Esophagus muscularis mucosa (tissue), 4 donors: ENCODE measurements at regions of chr7 and their contacts with region 1.

Region 1: DNA sequence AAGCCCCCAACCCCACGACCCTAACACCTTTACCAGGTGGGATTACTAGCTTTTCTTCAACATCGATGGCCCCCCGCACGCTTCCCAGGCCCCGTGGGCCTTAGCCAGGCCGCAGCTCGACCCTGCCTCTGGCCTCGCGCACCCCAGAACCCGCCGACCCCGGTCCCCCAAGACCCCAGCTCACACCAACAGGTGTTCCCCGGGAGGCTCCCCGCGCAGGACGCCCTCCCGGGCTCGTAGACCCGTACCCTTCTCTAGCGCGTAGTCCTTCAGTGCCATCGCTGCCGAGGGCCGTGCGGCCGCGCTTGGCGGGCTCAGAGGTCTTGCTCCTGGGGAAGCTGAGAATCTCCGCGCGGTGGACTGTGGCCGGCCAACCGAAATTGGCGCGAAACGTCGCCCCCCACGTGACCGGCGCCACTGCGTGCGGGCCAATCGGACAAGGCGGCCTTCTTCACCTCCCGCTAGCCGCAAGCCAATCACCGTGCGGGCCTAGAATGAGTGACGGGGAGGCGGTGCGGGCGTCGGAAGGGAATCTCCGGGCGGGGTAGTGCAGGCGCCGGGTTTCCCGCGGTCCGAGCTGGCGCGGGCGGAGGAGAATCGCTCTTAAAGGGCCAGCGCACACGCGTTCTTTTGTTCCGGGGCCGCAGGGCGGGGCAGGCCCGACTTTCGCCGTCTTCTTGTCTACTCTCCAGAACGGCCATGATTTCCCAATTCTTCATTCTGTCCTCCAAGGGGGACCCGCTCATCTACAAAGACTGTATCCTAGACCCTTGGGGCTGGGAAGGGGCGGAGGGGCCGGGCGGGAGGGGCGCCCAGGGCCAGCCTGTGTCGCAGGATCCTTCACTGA is at the starts of genes AP4M1 and MCM7:
- DNase-seq: peak; percentile 100
- H3K4me3 ChIP-seq: peak within 1 kb of the TSS; percentile 69 to 86 (median 82)
- H3K27ac ChIP-seq: peak within 1 kb of the TSS; percentile 93 to 98 (median 96)
- H3K4me1 ChIP-seq: peaks cover 19 to 39% (median 28%) of the 10 kb centered on the region in 4 donors
- H3K27me3 ChIP-seq: no peaks in the 10 kb centered on the region
- CTCF ChIP-seq: no peak
- EP300 ChIP-seq: no peak
- POLR2A ChIP-seq: no peak
- total RNA-seq, gene AP4M1: 19.9 to 31.7 (median 26.1) TPM
- total RNA-seq, gene MCM7: 35.3 to 60.3 (median 41.1) TPM

Region 2: DNA sequence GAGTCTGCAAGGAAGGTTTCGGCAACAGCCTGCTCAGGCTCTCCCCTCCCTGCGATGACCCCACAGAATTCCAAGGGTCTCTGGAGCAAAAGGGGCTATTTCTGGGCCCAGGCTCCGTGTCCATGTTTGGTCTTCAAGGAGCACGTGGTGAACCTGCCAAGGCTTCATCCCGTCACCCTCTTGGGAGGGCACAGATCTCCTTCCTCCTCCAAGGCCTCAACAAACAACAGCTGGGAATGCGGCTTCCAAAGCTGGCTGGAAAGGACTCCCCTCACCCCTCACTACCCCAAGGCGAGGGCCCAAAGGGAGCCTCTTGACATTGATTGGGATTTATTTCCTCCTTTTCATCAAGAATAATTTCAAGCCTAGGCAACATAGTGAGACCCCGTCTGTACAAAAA is 879.4 kb before region 1 on chr7:
- intact Hi-C with region 1: no loop called
- DNase-seq: no peak
- H3K4me3 ChIP-seq: no peak overlapping the region
- H3K27ac ChIP-seq: no peak overlapping the region
- H3K4me1 ChIP-seq: no peaks in the 10 kb centered on the region
- H3K27me3 ChIP-seq: peaks cover 0 to 9% (median 0%) of the 10 kb centered on the region in 4 donors
- CTCF ChIP-seq: no peak
- EP300 ChIP-seq: no peak
- POLR2A ChIP-seq: no peak

Region 3: GRCh38 chr7:100119062-100119700 is 17.9 kb after region 1 on chr7 and contains the starts of genes CNPY4 and TAF6:
- intact Hi-C with region 1: loop called (anchors 2 kb)
- DNase-seq: peak; percentile 99
- H3K4me3 ChIP-seq: peak within 1 kb of the TSS; percentile 68 to 87 (median 76)
- H3K27ac ChIP-seq: peak within 1 kb of the TSS; percentile 76 to 87 (median 85)
- H3K4me1 ChIP-seq: peaks cover 16 to 33% (median 23%) of the 10 kb centered on the region in 4 donors
- H3K27me3 ChIP-seq: no peaks in the 10 kb centered on the region
- CTCF ChIP-seq: peak in 2 of 3 experiments; percentile 13 to 36
- EP300 ChIP-seq: no peak
- POLR2A ChIP-seq: peak; percentile 26
- total RNA-seq, gene CNPY4: 8.3 to 16.2 (median 13.3) TPM
- total RNA-seq, gene TAF6: 48.5 to 92.1 (median 77.8) TPM